Endothelial cell of umbilical vein (primary cell): ENCODE measurements at regions of chr9 and their contacts with region 1.

Region 1: GRCh38 chr9:35116898-35117551 is 1.4 kb upstream of the ATOSB start:
- DNase-seq: peak; percentile 88
- H3K4me3 ChIP-seq: peak overlapping the region in 2 of 3 experiments; percentile 53 to 67
- H3K27ac ChIP-seq: no peak overlapping the region
- H3K4me1 ChIP-seq: peaks cover 31% of the 10 kb centered on the region
- H3K27me3 ChIP-seq: no peaks in the 10 kb centered on the region
- CTCF ChIP-seq: peak; percentile 92
- POLR2A ChIP-seq: no peak

Region 2: GRCh38 chr9:34989003-34989945 is 127.8 kb before region 1 on chr9 and contains the start of gene DNAJB5:
- CTCF ChIA-PET with region 1: no interaction called
- POLR2A ChIA-PET with region 1: no interaction called
- dilution Hi-C with region 1: no loop called
- intact Hi-C with region 1: loop called (anchors 1 kb)
- DNase-seq: peak; percentile 100
- H3K4me3 ChIP-seq: peak within 1 kb of the TSS; percentile 47 to 88 (median 60)
- H3K27ac ChIP-seq: peak within 1 kb of the TSS; percentile 79
- H3K4me1 ChIP-seq: peaks cover 40% of the 10 kb centered on the region
- H3K27me3 ChIP-seq: no peaks in the 10 kb centered on the region
- CTCF ChIP-seq: no peak
- POLR2A ChIP-seq: peak; percentile 67
- total RNA-seq, gene DNAJB5: 9.7 and 12.8 TPM in 2 replicates

Region 3: DNA sequence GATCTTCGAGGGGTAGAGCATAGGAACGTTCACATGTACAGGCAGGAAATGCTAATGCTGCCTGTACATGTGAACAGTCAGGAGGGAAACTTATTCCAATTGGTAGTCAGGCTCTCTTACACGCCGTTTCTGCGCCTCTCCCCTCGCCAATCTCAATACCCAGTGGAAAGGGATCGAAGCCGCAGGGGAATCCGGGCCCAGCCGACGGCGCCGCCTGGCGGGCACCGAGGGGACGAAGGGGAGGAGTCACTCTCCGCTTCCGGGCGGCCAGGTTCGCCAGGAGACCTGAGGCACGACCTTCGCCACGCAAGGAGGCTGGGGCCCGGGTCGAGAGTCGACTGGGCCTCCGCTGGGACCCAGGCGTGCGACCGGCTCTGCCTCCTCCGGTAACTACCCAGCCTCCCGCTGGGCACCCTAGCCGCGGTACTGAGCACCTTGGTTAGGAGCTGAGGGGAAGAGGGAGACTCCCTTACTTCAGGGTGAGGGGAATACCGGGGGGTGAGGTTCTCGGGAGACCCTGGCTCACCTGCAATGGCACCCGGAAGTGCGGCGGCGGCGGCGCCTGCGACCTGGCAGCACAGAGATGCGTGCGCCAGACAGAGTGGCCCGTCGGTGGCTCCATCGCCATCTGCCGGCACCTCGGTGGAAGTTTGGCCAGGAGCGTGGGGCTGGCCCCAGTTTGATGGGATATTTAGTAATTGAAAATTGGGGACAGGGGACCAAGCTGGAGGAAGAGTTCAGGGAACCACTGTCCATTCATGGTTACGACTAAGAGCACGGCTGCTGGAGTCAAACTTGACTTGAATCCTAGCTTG is 20.8 kb before region 1 on chr9 and contains the start of gene PIGO:
- CTCF ChIA-PET with region 1: interaction called, 11 read pairs
- POLR2A ChIA-PET with region 1: no interaction called
- dilution Hi-C with region 1: no loop called
- intact Hi-C with region 1: no loop called
- DNase-seq: peak; percentile 78
- H3K4me3 ChIP-seq: peak within 1 kb of the TSS; percentile 69 to 93 (median 74)
- H3K27ac ChIP-seq: peak within 1 kb of the TSS; percentile 85
- H3K4me1 ChIP-seq: peaks cover 2% of the 10 kb centered on the region
- H3K27me3 ChIP-seq: no peaks in the 10 kb centered on the region
- CTCF ChIP-seq: peak; percentile 77 to 99
- POLR2A ChIP-seq: peak; percentile 46
- total RNA-seq, gene PIGO: 17.7 and 23.5 TPM in 2 replicates

Region 4: GRCh38 chr9:35161713-35162604 is 44.9 kb after region 1 on chr9 and contains the start of gene UNC13B:
- CTCF ChIA-PET with region 1: interaction called, 39 read pairs
- POLR2A ChIA-PET with region 1: interaction called, 7 read pairs
- dilution Hi-C with region 1: no loop called
- intact Hi-C with region 1: loop called (anchors 1 kb)
- DNase-seq: peak; percentile 96
- H3K4me3 ChIP-seq: peak within 1 kb of the TSS; percentile 86 to 95 (median 94)
- H3K27ac ChIP-seq: peak within 1 kb of the TSS; percentile 70
- H3K4me1 ChIP-seq: peaks cover 34% of the 10 kb centered on the region
- H3K27me3 ChIP-seq: no peaks in the 10 kb centered on the region
- CTCF ChIP-seq: no peak
- POLR2A ChIP-seq: peak; percentile 96
- total RNA-seq, gene UNC13B: 44.2 and 46.2 TPM in 2 replicates

Region 5: GRCh38 chr9:35333551-35333950 is 216.5 kb after region 1 on chr9:
- CTCF ChIA-PET with region 1: interaction called, 8 read pairs
- POLR2A ChIA-PET with region 1: interaction called, 4 read pairs
- dilution Hi-C with region 1: no loop called
- intact Hi-C with region 1: loop called (anchors 1 kb)
- DNase-seq: peak; percentile 59
- H3K4me3 ChIP-seq: no peak overlapping the region
- H3K27ac ChIP-seq: peak overlapping the region; percentile 93
- H3K4me1 ChIP-seq: peaks cover 37% of the 10 kb centered on the region
- H3K27me3 ChIP-seq: no peaks in the 10 kb centered on the region
- CTCF ChIP-seq: no peak
- POLR2A ChIP-seq: no peak

Region 6: GRCh38 chr9:35400996-35401395 is 284.0 kb after region 1 on chr9:
- CTCF ChIA-PET with region 1: interaction called, 19 read pairs
- POLR2A ChIA-PET with region 1: interaction called, 4 read pairs
- dilution Hi-C with region 1: no loop called
- intact Hi-C with region 1: no loop called
- DNase-seq: no peak
- H3K4me3 ChIP-seq: no peak overlapping the region
- H3K27ac ChIP-seq: no peak overlapping the region
- H3K4me1 ChIP-seq: no peaks in the 10 kb centered on the region
- H3K27me3 ChIP-seq: no peaks in the 10 kb centered on the region
- CTCF ChIP-seq: no peak
- POLR2A ChIP-seq: no peak

Region 7: DNA sequence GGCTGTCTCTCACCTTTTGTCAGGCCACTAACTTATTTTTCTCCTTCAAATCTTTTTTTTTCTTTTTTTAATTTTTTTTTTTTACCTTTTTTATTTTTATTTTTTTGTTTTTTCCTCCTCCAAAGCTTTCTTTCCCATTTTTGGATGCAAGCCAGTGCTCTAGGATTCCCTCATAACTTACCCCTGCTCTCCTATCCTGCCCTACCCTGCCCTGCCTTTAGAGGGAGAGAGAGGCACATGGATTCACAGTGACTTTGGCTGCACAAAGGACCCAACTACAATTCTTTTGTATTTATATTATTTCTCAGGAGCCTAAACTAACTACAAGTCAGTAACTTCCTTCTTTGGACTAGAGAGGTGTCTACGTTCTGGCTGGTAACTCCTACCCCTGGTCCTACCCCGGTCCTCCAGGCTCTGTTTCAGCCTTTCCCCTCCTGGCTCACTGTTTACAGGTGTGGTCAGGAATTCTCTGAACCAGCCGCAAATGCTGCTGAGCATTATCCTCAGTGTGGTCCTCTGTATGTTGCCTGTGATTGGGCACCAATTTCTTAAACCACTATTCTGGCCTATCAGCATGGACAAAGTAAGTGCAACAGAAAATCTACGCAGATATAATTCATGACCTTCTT is 364.4 kb after region 1 on chr9:
- CTCF ChIA-PET with region 1: interaction called, 83 read pairs
- POLR2A ChIA-PET with region 1: no interaction called
- dilution Hi-C with region 1: no loop called
- intact Hi-C with region 1: loop called (anchors 1 kb)
- DNase-seq: peak; percentile 71
- H3K4me3 ChIP-seq: no peak overlapping the region
- H3K27ac ChIP-seq: no peak overlapping the region
- H3K4me1 ChIP-seq: peaks cover 5% of the 10 kb centered on the region
- H3K27me3 ChIP-seq: no peaks in the 10 kb centered on the region
- CTCF ChIP-seq: peak; percentile 75 to 80
- POLR2A ChIP-seq: no peak